T-cell (primary cell): ENCODE measurements at regions of chr1 and their contacts with region 1.

Region 1: GRCh38 chr1:155084722-155085503 is 6.3 kb downstream of the EFNA3 start:
- DNase-seq: peak; percentile 79 to 95 (median 89)
- ATAC-seq: peak; percentile 80 to 84 (median 82)
- H3K4me3 ChIP-seq: peak overlapping the region; percentile 63 to 84
- H3K4me3 Mint-ChIP-seq: peak overlapping the region; percentile 87 to 97 (median 94)
- H3K27ac ChIP-seq: peak overlapping the region; percentile 80
- H3K27ac Mint-ChIP-seq: peak overlapping the region; percentile 81 to 97
- H3K4me1 ChIP-seq: peaks cover 43 to 63% of the 10 kb centered on the region in 2 experiments
- H3K4me1 Mint-ChIP-seq: peaks cover 35 to 46% (median 42%) of the 10 kb centered on the region in 3 donors
- H3K27me3 ChIP-seq: peaks cover 2 to 48% of the 10 kb centered on the region in 2 experiments
- H3K27me3 Mint-ChIP-seq: peaks cover 20 to 31% of the 10 kb centered on the region in 2 donors

Region 2: DNA sequence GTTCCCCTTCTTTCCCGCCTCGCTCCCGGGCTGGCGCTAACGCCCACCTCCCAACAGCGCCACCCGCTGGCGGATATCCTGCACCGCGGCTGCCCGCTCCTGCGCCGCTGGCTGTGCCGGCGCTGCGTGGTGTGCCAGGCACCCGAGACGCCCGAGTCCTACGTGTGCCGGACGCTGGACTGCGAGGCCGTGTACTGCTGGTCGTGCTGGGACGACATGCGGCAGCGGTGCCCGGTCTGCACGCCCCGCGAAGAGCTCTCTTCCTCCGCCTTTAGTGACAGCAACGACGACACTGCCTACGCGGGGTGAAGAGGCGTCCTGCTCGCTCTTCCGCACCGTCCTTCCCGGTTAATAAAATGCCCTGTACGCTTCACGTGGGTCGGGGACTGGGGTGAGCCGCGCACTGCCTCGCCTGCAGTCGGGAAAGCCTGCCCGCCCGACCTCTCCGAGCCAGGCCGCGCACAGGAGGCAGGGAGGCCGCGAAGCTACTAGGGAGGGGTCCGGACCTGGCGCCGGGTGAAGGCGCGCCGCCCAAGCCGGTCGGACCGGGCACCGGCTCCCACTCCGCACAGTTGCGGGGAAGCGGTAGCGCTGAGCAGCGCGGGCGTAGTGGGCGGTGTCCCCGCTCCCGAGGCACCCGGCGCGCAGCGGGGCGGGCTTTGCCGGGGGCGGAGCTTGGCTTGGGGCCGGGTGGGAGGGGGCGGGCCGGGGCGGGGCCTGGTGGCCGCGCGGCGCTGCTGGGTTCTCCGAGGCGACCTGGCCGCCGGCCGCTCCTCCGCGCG is 34.2 kb before region 1 on chr1 and contains the start of gene ADAM15:
- CTCF ChIA-PET with region 1: interaction called, 5 to 11 read pairs
- POLR2A ChIA-PET with region 1: no interaction called
- DNase-seq: peak in 34 of 35 experiments; percentile 47 to 88 (median 70)
- ATAC-seq: peak; percentile 86 to 89 (median 88)
- H3K4me3 ChIP-seq: peak within 1 kb of the TSS; percentile 81 to 84
- H3K4me3 Mint-ChIP-seq: peak within 1 kb of the TSS; percentile 79 to 88 (median 85)
- H3K27ac ChIP-seq: peak within 1 kb of the TSS; percentile 49
- H3K27ac Mint-ChIP-seq: peak within 1 kb of the TSS; percentile 74 to 83
- H3K4me1 ChIP-seq: peaks cover 4 to 32% of the 10 kb centered on the region in 2 experiments
- H3K4me1 Mint-ChIP-seq: peaks cover 14 to 26% (median 20%) of the 10 kb centered on the region in 3 donors
- H3K27me3 ChIP-seq: peaks cover 0 to 6% of the 10 kb centered on the region in 2 experiments
- H3K27me3 Mint-ChIP-seq: no peaks in the 10 kb centered on the region
- total RNA-seq, gene ADAM15: 17.3 to 53.0 (median 37.2) TPM

Region 3: DNA sequence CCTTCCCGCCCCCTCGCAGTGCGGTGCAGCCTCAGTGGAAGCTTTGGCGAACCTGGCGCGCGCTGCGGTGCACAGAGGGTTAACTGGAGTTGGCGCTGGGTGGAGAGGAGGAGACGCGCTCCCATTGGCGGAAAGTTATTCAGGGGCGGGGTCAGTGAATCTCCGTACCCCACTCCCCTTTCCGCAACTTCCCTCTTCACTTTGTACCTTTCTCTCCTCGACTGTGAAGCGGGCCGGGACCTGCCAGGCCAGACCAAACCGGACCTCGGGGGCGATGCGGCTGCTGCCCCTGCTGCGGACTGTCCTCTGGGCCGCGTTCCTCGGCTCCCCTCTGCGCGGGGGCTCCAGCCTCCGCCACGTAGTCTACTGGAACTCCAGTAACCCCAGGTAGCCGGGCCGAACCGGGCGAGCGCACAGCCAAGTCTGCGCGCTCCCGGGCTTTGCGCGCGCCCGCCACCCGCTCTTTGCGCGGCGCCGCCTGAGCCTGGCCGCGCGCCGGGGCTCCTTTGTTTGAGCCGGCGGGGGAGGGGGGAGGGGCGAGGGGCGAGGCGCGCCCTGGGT is 21.3 kb before region 1 on chr1 and contains the start of gene EFNA4:
- CTCF ChIA-PET with region 1: interaction called, 4 to 57 read pairs
- POLR2A ChIA-PET with region 1: interaction called, 3 to 6 read pairs
- DNase-seq: peak; percentile 63 to 90 (median 81)
- ATAC-seq: peak; percentile 88 to 89 (median 89)
- H3K4me3 ChIP-seq: peak within 1 kb of the TSS; percentile 86 to 89
- H3K4me3 Mint-ChIP-seq: peak within 1 kb of the TSS; percentile 84 to 88 (median 86)
- H3K27ac ChIP-seq: peak within 1 kb of the TSS; percentile 47
- H3K27ac Mint-ChIP-seq: peak within 1 kb of the TSS; percentile 68 to 83
- H3K4me1 ChIP-seq: peaks cover 14 to 31% of the 10 kb centered on the region in 2 experiments
- H3K4me1 Mint-ChIP-seq: peaks cover 26 to 43% (median 41%) of the 10 kb centered on the region in 3 donors
- H3K27me3 ChIP-seq: no peaks in the 10 kb centered on the region
- H3K27me3 Mint-ChIP-seq: no peaks in the 10 kb centered on the region
- total RNA-seq, gene EFNA4: 3.1 to 7.8 (median 6.6) TPM

Region 4: DNA sequence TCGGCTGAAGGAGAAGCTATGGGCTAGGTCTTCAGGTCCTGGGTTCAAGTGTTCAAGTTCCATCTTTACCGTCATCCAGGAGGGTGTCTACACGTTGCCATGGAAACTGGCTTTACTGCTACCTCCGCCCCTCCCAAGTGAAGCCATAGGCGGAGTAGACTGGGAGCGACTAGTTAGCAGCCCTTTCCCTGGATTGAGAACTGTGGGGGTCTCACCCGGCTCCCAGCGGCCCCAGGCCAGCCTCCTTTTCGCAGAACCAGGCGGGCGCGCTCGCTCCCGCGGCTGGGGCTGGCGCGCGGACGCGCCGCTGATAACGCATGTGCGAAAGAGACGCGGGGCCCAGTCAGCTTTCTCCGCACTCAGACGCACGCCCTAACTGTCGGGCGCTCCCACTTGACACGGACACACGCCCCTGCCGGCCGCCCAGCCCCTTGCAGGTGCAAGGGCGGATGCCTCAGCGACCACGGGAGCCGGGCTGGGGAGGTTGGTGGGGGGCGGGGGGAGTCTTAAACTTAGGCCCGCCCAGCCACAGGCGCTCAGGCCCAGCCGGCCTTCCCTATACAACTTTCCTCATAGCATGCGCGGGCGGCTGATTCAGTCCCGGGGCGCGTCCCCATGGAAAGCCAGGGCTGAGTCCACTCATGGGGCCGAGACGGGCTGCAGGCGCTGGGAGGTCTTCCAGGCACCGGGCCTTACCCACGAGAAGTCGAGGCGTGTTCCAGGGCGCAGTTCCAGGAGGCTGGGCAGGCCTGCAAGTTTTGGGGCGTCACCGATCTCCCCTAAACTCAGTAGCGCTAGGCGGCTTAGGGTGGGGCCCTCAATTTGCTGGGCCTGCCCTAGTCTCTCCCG is 14.0 kb before region 1 on chr1:
- CTCF ChIA-PET with region 1: interaction called, 6 to 57 read pairs
- POLR2A ChIA-PET with region 1: interaction called in 1 of 2 experiments, 3 read pairs
- DNase-seq: peak in 34 of 35 experiments; percentile 56 to 87 (median 79)
- ATAC-seq: peak; percentile 93 to 97 (median 96)
- H3K4me3 ChIP-seq: peak overlapping the region; percentile 42 to 64
- H3K4me3 Mint-ChIP-seq: peak overlapping the region; percentile 46 to 67 (median 47)
- H3K27ac ChIP-seq: peak overlapping the region; percentile 23
- H3K27ac Mint-ChIP-seq: peak overlapping the region in 1 of 2 donors; percentile 33
- H3K4me1 ChIP-seq: peaks cover 28 to 39% of the 10 kb centered on the region in 2 experiments
- H3K4me1 Mint-ChIP-seq: peaks cover 23 to 37% (median 33%) of the 10 kb centered on the region in 3 donors
- H3K27me3 ChIP-seq: peaks cover 0 to 9% of the 10 kb centered on the region in 2 experiments
- H3K27me3 Mint-ChIP-seq: no peaks in the 10 kb centered on the region